ENCODE measurements at regions of chr15 and their contacts with region 1.

Region 1: DNA sequence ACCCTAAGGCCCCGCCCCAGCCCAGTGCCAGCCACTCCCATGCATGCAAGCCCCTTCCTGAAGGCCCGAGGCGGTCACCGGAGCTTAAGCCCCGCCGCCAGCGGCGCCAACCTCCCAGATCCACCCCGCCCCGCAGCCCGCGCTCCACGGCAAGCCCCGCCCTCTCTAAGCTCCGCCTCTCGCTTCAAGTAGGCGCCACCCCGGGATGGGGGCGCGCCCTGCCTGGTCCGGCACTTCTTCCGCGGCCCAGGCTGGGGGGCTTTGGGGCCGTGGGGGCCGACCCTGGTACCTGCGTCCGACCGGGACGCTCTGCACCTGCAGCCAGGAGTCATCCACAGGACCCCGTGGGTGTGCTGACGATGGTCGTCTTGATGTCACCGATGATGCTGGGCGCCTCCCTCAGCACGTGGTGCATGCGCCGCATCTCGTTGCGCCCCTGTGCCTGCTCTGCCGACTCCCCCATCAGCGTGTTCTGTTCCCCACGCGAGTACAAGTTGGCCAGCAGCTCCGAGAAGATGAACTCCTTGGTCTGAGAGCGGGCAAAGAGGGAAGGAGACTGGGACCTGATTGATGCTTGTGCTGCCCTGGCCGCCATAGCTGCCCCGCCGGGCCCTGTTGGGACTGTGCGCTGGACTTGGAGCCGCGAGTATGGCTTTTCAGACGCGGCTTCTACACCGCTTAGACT is 26.1 kb upstream of the CSPG4 start:
- DNase-seq: peak; percentile 98
- H3K4me3 ChIP-seq: peak overlapping the region; percentile 90
- H3K27ac ChIP-seq: no peak overlapping the region
- H3K4me1 ChIP-seq: no peaks in the 10 kb centered on the region
- H3K27me3 ChIP-seq: no peaks in the 10 kb centered on the region
- CTCF ChIP-seq: no peak

Region 2: DNA sequence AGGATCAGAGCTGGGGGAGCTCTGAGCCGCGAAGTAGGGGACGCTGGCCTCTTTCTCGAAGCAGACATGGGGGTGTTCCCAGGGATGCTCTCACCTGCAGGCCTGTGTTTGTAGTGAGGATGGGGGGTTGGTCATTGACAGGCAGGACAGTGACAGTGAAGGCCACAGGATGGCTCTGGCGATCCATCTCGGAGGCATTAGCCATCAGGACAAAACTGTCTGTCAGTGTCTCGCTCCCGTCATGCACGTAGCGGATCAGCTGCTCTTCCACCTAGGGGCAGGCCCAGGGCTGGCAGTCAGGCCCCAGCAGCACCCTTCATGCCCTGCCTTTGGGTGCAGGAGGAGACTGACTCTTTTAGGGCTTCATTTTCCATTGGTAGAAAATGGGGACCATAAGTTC is 54.1 kb before region 1 on chr15:
- intact Hi-C with region 1: loop called (anchors 10 kb)
- DNase-seq: no peak
- H3K4me3 ChIP-seq: no peak overlapping the region
- H3K27ac ChIP-seq: no peak overlapping the region
- H3K4me1 ChIP-seq: no peaks in the 10 kb centered on the region
- H3K27me3 ChIP-seq: no peaks in the 10 kb centered on the region
- CTCF ChIP-seq: no peak

Region 3: DNA sequence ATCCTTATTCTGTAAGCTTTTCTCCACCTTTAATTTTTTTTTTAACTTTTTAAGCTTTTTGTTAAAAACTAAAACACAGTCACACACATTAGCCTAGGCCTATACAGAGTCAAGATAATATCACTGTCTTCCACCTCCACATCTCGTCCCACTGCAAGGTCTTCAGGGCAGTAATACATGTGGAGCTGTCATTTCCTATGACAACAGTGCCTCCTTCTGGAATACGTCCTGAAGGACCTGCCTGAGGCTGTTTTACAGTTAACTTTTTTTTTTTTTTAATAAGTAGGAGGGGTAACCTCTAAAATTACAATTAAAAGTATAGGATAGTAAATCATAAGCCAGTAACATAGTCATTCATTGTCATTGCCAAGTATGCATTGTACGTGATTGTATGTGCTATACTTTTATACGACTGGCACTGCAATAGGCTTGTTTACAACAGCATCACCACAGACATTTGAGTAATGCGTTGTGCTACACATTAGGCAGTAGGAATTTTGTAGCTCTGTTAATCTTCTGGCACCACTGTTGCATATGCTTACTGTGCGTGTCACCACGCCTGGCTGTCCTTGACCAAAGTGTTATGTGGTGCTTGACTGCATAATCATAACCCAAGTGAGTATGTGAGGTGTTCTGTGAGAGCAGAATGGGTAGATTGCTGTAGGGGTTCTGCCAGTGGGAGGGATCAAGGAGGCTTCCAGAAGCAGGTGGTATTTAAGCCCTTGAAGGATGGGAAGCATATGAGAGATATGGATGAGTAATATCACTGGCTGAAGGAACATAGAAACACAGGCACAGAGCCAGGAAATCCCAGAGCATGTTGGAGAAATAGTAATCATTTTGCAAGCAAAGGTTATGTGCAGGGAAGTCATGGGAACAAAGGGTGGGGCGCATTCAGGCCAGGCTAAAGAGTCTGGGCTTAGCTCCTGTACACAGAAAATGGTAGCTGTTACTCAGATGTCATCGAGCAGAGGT is 183.2 kb after region 1 on chr15:
- intact Hi-C with region 1: loop called (anchors 10 kb)
- DNase-seq: peak; percentile 70
- H3K4me3 ChIP-seq: no peak overlapping the region
- H3K27ac ChIP-seq: peak overlapping the region; percentile 19
- H3K4me1 ChIP-seq: no peaks in the 10 kb centered on the region
- H3K27me3 ChIP-seq: no peaks in the 10 kb centered on the region
- CTCF ChIP-seq: peak; percentile 49

Measured in colonic mucosa (tissue), 4 donors.